CD4-positive, alpha-beta memory T cell (primary cell): ENCODE measurements at regions of chr1 and their contacts with region 1.

Region 1: DNA sequence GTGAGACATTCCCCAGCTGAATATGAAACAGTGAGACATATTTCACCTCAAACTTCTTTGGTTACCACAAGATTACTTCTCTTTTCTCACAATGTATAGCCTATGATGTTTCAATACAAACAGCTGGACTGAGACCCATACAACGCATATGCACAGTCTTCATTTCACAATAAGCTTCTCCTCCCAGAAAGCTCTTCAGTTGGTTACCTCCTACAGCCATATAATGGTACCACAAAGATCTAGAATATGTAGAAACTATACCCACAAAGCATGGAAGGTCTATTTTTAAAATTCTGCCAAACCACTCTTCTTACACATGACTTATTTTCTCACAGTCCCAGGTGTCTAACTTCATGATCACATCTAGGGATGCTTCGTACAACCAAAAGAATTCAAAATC is 70.8 kb downstream of the JAK1 start:
- DNase-seq: no peak
- H3K4me3 ChIP-seq: no peak overlapping the region
- H3K4me3 Mint-ChIP-seq: peak overlapping the region in 7 of 8 donors; percentile 13 to 49 (median 28)
- H3K27ac ChIP-seq: no peak overlapping the region
- H3K27ac Mint-ChIP-seq: peak overlapping the region in 5 of 7 donors; percentile 2 to 72 (median 17)
- H3K4me1 ChIP-seq: peaks cover 96% of the 10 kb centered on the region
- H3K4me1 Mint-ChIP-seq: peaks cover 82 to 98% (median 91%) of the 10 kb centered on the region in 4 donors
- H3K27me3 ChIP-seq: no peaks in the 10 kb centered on the region
- H3K27me3 Mint-ChIP-seq: no peaks in the 10 kb centered on the region

Region 2: GRCh38 chr1:64882574-64883255 is 12.8 kb before region 1 on chr1:
- CTCF ChIA-PET with region 1: interaction called, 4 read pairs
- POLR2A ChIA-PET with region 1: interaction called, 6 read pairs
- intact Hi-C with region 1: loop called (anchors 1 kb)
- DNase-seq: no peak
- H3K4me3 ChIP-seq: no peak overlapping the region
- H3K4me3 Mint-ChIP-seq: no peak overlapping the region
- H3K27ac ChIP-seq: no peak overlapping the region
- H3K27ac Mint-ChIP-seq: peak overlapping the region in 6 of 7 donors; percentile 41 to 85 (median 72)
- H3K4me1 ChIP-seq: peaks cover 63% of the 10 kb centered on the region
- H3K4me1 Mint-ChIP-seq: peaks cover 58 to 93% (median 76%) of the 10 kb centered on the region in 4 donors
- H3K27me3 ChIP-seq: no peaks in the 10 kb centered on the region
- H3K27me3 Mint-ChIP-seq: no peaks in the 10 kb centered on the region

Region 3: DNA sequence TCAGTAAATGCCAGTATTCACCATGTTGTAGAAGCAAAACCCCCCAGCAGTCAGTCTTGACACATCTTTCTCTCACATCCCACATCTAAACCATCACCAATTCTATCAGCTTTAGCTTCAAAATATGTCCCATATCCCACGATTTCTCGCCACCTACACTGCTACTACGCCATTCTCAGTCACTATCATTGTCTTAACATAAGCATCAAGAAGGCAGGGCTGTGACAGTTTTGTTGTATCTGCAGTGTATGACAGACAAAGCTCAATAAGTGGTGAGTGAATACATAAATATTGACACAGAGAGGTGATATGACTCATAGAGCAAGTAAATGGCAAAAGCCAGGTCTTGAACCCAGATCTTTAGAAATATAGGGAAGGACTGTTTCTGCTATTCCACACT is 10.9 kb after region 1 on chr1:
- CTCF ChIA-PET with region 1: interaction called, 5 read pairs
- POLR2A ChIA-PET with region 1: interaction called, 10 read pairs
- intact Hi-C with region 1: loop called (anchors 2 kb)
- DNase-seq: no peak
- H3K4me3 ChIP-seq: no peak overlapping the region
- H3K4me3 Mint-ChIP-seq: peak overlapping the region in 5 of 8 donors; percentile 2 to 52 (median 26)
- H3K27ac ChIP-seq: no peak overlapping the region
- H3K27ac Mint-ChIP-seq: peak overlapping the region in 6 of 7 donors; percentile 2 to 46 (median 15)
- H3K4me1 ChIP-seq: peaks cover 97% of the 10 kb centered on the region
- H3K4me1 Mint-ChIP-seq: peaks cover 79 to 97% (median 90%) of the 10 kb centered on the region in 4 donors
- H3K27me3 ChIP-seq: no peaks in the 10 kb centered on the region
- H3K27me3 Mint-ChIP-seq: no peaks in the 10 kb centered on the region

Region 4: DNA sequence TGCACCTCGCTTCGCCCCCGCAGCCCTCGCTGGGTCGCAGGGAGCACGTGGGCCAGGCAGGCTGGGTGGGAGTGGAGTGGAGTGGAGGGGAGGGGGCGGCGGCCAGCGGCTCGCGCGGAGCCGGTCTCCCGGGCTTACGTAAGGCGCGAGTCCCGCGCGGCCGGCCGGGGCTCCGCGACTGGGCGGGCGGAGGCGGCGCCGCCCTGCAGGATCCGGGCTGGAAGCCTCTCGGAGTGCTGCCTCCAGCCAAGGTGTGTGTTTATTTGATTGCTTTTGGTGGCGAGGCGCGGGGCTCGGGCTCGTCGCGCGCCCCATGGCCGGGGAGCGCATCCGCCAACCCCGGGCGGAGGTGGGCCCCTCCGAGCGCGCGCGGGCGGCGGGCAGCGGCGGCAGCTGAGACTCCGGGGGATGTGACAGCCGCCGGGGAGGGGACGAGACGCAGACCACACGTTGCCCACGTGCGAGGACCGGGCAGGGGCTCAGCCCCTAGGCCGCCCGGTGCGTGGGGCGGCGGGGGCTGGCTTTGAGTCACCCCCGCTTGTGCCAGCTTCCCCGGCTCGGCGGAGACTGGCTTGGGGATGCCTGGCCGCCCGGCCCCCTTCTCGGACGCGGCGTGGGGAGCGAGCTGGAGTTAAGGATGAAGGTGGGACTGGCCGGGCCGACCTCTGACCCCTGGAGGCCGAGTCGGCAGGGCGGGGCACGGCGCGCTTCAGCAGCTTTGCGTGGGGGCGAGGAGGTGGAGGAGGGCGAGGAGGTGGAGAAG is 252.1 kb after region 1 on chr1:
- CTCF ChIA-PET with region 1: no interaction called
- POLR2A ChIA-PET with region 1: no interaction called
- intact Hi-C with region 1: no loop called
- DNase-seq: peak in 3 of 5 donors; percentile 6 to 31 (median 9)
- H3K4me3 ChIP-seq: peak overlapping the region in 1 of 2 donors; percentile 8
- H3K4me3 Mint-ChIP-seq: peak overlapping the region; percentile 75 to 86 (median 79)
- H3K27ac ChIP-seq: no peak overlapping the region
- H3K27ac Mint-ChIP-seq: no peak overlapping the region
- H3K4me1 ChIP-seq: peaks cover 14% of the 10 kb centered on the region
- H3K4me1 Mint-ChIP-seq: peaks cover 9 to 18% (median 14%) of the 10 kb centered on the region in 4 donors
- H3K27me3 ChIP-seq: peaks cover 5% of the 10 kb centered on the region
- H3K27me3 Mint-ChIP-seq: peaks cover 33 to 44% of the 10 kb centered on the region in 2 donors